HepG2 (cell line): ENCODE measurements at regions of chr5 and their contacts with region 1.

Region 1: DNA sequence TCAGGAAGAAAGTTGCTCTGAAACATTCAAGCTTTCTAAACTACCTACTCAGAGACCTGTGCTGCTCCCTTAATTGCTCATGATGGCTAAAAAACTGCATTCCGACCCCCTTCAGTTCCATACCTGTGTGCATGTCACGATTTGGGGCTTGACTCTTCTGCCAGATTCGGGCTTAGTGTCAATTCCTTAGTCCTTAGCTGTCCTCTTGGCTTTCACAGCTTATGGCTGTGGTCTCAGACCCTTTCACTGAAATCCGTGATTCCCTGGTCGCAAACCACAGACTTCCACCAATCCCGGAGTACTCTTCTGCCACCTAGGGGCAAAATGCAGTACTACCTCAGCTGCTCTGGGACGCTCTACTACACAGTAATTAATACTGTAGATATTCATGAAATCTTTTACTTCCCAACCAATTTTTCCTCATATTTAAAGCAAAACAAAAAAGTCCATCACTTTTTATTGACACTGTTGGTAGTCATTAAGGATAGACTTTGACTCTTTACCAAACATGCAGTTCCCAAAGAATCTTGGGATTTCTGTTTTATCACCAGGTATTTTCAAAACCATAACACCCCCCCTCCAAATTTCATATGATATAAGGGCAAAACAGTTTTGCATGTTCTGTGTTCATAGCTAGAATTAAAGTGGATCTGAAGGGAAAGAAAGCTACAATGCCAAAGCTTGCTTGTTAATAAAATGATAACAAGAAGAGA is 617.4 kb downstream of the SLCO4C1 start:
- DNase-seq: peak; percentile 52
- ATAC-seq: peak; percentile 98
- H3K4me3 ChIP-seq: no peak overlapping the region
- H3K27ac ChIP-seq: no peak overlapping the region
- H3K4me1 ChIP-seq: peaks cover 7% of the 10 kb centered on the region
- H3K27me3 ChIP-seq: no peaks in the 10 kb centered on the region
- CTCF ChIP-seq: peak; percentile 84
- EP300 ChIP-seq: no peak
- POLR2A ChIP-seq: no peak
- RAD21 ChIP-seq: peak; percentile 15; the same call in 1 of the 2 replicates

Region 2: GRCh38 chr5:100430268-100431195 is 1248.1 kb before region 1 on chr5:
- CTCF ChIA-PET with region 1: interaction called, 3 read pairs
- POLR2A ChIA-PET with region 1: no interaction called
- in situ Hi-C with region 1: no loop called
- intact Hi-C with region 1: loop called (anchors 2 kb)
- DNase-seq: peak; percentile 26
- ATAC-seq: peak; percentile 66
- H3K4me3 ChIP-seq: no peak overlapping the region
- H3K27ac ChIP-seq: no peak overlapping the region
- H3K4me1 ChIP-seq: no peaks in the 10 kb centered on the region
- H3K27me3 ChIP-seq: no peaks in the 10 kb centered on the region
- CTCF ChIP-seq: peak; percentile 76
- EP300 ChIP-seq: no peak
- POLR2A ChIP-seq: no peak
- RAD21 ChIP-seq: no peak; the same call in 1 of the 2 replicates

Region 3: GRCh38 chr5:100772548-100772947 is 906.1 kb before region 1 on chr5:
- CTCF ChIA-PET with region 1: no interaction called
- POLR2A ChIA-PET with region 1: no interaction called
- in situ Hi-C with region 1: no loop called
- intact Hi-C with region 1: loop called (anchors 5 kb)
- DNase-seq: no peak
- ATAC-seq: no peak
- H3K4me3 ChIP-seq: no peak overlapping the region
- H3K27ac ChIP-seq: no peak overlapping the region
- H3K4me1 ChIP-seq: no peaks in the 10 kb centered on the region
- H3K27me3 ChIP-seq: no peaks in the 10 kb centered on the region
- CTCF ChIP-seq: no peak
- EP300 ChIP-seq: no peak
- POLR2A ChIP-seq: no peak
- RAD21 ChIP-seq: no peak